ENCODE measurements at regions of chr1 and their contacts with region 1.

Region 1: GRCh38 chr1:241847796-241848685 is at the start of gene EXO1:
- DNase-seq: peak; percentile 90 to 93 (median 92)
- H3K4me3 ChIP-seq: peak within 1 kb of the TSS; percentile 80 to 98
- H3K4me3 Mint-ChIP-seq: peak within 1 kb of the TSS; percentile 95 to 99 (median 98)
- H3K27ac ChIP-seq: peak within 1 kb of the TSS; percentile 85
- H3K27ac Mint-ChIP-seq: peak within 1 kb of the TSS; percentile 98 to 100 (median 99)
- H3K4me1 ChIP-seq: peaks cover 14% of the 10 kb centered on the region
- H3K4me1 Mint-ChIP-seq: peaks cover 13 to 20% (median 15%) of the 10 kb centered on the region in 4 donors
- H3K27me3 ChIP-seq: no peaks in the 10 kb centered on the region
- H3K27me3 Mint-ChIP-seq: no peaks in the 10 kb centered on the region
- total RNA-seq, gene EXO1: 0.41 to 0.44 TPM

Region 2: GRCh38 chr1:240575981-240576662 is 1271.9 kb before region 1 on chr1:
- CTCF ChIA-PET with region 1: no interaction called
- POLR2A ChIA-PET with region 1: no interaction called
- intact Hi-C with region 1: loop called (anchors 5 kb)
- DNase-seq: peak; percentile 69 to 83 (median 79)
- H3K4me3 ChIP-seq: no peak overlapping the region
- H3K4me3 Mint-ChIP-seq: peak overlapping the region; percentile 46 to 87 (median 68)
- H3K27ac ChIP-seq: peak overlapping the region; percentile 53
- H3K27ac Mint-ChIP-seq: peak overlapping the region; percentile 81 to 92 (median 89)
- H3K4me1 ChIP-seq: peaks cover 19% of the 10 kb centered on the region
- H3K4me1 Mint-ChIP-seq: peaks cover 14 to 48% (median 33%) of the 10 kb centered on the region in 4 donors
- H3K27me3 ChIP-seq: no peaks in the 10 kb centered on the region
- H3K27me3 Mint-ChIP-seq: no peaks in the 10 kb centered on the region

Region 3: GRCh38 chr1:241519308-241520079 is 328.5 kb before region 1 on chr1 and contains the start of gene FH:
- CTCF ChIA-PET with region 1: interaction called, 4 read pairs
- POLR2A ChIA-PET with region 1: no interaction called
- intact Hi-C with region 1: loop called (anchors 1 kb)
- DNase-seq: peak; percentile 92 to 95 (median 94)
- H3K4me3 ChIP-seq: peak within 1 kb of the TSS; percentile 75 to 76
- H3K4me3 Mint-ChIP-seq: peak within 1 kb of the TSS in 7 of 8 donors; percentile 84 to 93 (median 90)
- H3K27ac ChIP-seq: peak within 1 kb of the TSS; percentile 57
- H3K27ac Mint-ChIP-seq: peak within 1 kb of the TSS; percentile 54 to 95 (median 90)
- H3K4me1 ChIP-seq: peaks cover 17% of the 10 kb centered on the region
- H3K4me1 Mint-ChIP-seq: peaks cover 11 to 32% (median 22%) of the 10 kb centered on the region in 4 donors
- H3K27me3 ChIP-seq: peaks cover 8% of the 10 kb centered on the region
- H3K27me3 Mint-ChIP-seq: peaks cover 16 to 17% of the 10 kb centered on the region in 2 donors
- total RNA-seq, gene FH: 21.0 to 25.9 TPM

Region 4: GRCh38 chr1:241600496-241600901 is 247.5 kb before region 1 on chr1:
- CTCF ChIA-PET with region 1: no interaction called
- POLR2A ChIA-PET with region 1: no interaction called
- intact Hi-C with region 1: no loop called
- DNase-seq: no peak
- H3K4me3 ChIP-seq: no peak overlapping the region
- H3K4me3 Mint-ChIP-seq: no peak overlapping the region
- H3K27ac ChIP-seq: no peak overlapping the region
- H3K27ac Mint-ChIP-seq: peak overlapping the region in 1 of 7 donors; percentile 11
- H3K4me1 ChIP-seq: no peaks in the 10 kb centered on the region
- H3K4me1 Mint-ChIP-seq: no peaks in the 10 kb centered on the region
- H3K27me3 ChIP-seq: no peaks in the 10 kb centered on the region
- H3K27me3 Mint-ChIP-seq: peaks cover under 1 to 1% of the 10 kb centered on the region in 2 donors

Region 5: GRCh38 chr1:241640029-241640818 is 207.8 kb before region 1 on chr1 and contains the starts of genes CHML and OPN3:
- CTCF ChIA-PET with region 1: no interaction called
- POLR2A ChIA-PET with region 1: interaction called, 10 read pairs
- intact Hi-C with region 1: loop called (anchors 1 kb)
- DNase-seq: peak; percentile 83 to 87 (median 84)
- H3K4me3 ChIP-seq: peak within 1 kb of the TSS; percentile 64 to 82
- H3K4me3 Mint-ChIP-seq: peak within 1 kb of the TSS; percentile 81 to 89 (median 86)
- H3K27ac ChIP-seq: peak within 1 kb of the TSS; percentile 41
- H3K27ac Mint-ChIP-seq: peak within 1 kb of the TSS; percentile 60 to 96 (median 85)
- H3K4me1 ChIP-seq: peaks cover 25% of the 10 kb centered on the region
- H3K4me1 Mint-ChIP-seq: peaks cover 18 to 40% (median 25%) of the 10 kb centered on the region in 4 donors
- H3K27me3 ChIP-seq: no peaks in the 10 kb centered on the region
- H3K27me3 Mint-ChIP-seq: no peaks in the 10 kb centered on the region
- total RNA-seq, gene CHML: 7.5 to 8.8 TPM
- total RNA-seq, gene OPN3: 3.9 to 4.8 TPM

Region 6: GRCh38 chr1:243325305-243325890 is 1477.4 kb after region 1 on chr1:
- CTCF ChIA-PET with region 1: no interaction called
- POLR2A ChIA-PET with region 1: no interaction called
- intact Hi-C with region 1: loop called (anchors 1 kb)
- DNase-seq: peak in 4 of 5 donors; percentile 35 to 53 (median 47)
- H3K4me3 ChIP-seq: no peak overlapping the region
- H3K4me3 Mint-ChIP-seq: no peak overlapping the region
- H3K27ac ChIP-seq: no peak overlapping the region
- H3K27ac Mint-ChIP-seq: no peak overlapping the region
- H3K4me1 ChIP-seq: no peaks in the 10 kb centered on the region
- H3K4me1 Mint-ChIP-seq: no peaks in the 10 kb centered on the region
- H3K27me3 ChIP-seq: no peaks in the 10 kb centered on the region
- H3K27me3 Mint-ChIP-seq: no peaks in the 10 kb centered on the region